ENCODE measurements at regions of chr18 and their contacts with region 1.

Region 1: GRCh38 chr18:3665780-3666525 is 216.0 kb downstream of the TGIF1 start:
- DNase-seq: peak; percentile 71
- CTCF ChIP-seq: peak; percentile 86

Region 2: GRCh38 chr18:3297025-3297984 is 368.6 kb before region 1 on chr18:
- CTCF ChIA-PET with region 1: interaction called, 34 read pairs
- POLR2A ChIA-PET with region 1: no interaction called
- DNase-seq: peak; percentile 81
- CTCF ChIP-seq: peak; percentile 88

Region 3: GRCh38 chr18:3451183-3451988 is 214.6 kb before region 1 on chr18:
- CTCF ChIA-PET with region 1: interaction called, 17 read pairs
- POLR2A ChIA-PET with region 1: no interaction called
- DNase-seq: peak; percentile 60
- CTCF ChIP-seq: no peak

Region 4: DNA sequence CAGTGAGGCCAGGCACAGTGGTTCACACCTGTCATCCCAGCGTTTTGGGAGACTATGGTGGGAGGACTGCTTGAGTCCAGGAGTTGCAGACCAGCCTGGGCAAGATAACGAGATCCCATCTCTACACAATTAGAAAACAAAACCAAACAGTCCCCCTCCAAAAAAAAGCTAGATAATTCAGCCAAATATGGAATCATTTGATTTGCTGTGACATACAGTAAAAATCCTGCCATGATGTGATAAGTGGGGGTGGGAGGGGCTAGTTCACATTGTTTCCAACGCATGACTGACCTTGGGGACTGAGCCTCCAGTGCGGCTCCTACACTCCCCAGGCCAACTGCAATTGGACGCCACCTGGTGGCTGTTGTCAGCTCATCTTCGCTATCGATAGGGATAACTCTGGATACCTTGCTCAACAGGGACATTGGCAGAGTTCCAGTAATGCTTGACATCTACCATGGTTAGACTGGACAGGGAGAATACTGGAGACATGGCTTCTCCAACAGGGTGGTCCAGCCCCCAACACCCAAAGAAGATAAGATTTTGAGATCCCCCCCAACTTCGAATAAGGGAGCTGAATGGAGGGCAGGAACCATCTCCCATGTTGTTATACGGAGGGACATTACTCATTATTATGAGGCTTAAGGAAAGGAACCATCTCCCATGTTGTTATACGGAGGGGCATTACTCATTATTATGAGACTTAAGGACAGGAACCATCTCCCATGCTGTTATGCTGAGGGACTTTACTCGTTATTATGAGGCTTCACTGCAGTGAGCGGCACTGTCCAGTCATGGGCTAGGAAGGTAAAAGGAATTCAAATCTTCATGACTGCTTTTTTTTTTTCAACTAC is 80.1 kb before region 1 on chr18:
- CTCF ChIA-PET with region 1: interaction called, 18 read pairs
- POLR2A ChIA-PET with region 1: no interaction called
- DNase-seq: peak; percentile 61
- CTCF ChIP-seq: peak; percentile 81

Region 5: DNA sequence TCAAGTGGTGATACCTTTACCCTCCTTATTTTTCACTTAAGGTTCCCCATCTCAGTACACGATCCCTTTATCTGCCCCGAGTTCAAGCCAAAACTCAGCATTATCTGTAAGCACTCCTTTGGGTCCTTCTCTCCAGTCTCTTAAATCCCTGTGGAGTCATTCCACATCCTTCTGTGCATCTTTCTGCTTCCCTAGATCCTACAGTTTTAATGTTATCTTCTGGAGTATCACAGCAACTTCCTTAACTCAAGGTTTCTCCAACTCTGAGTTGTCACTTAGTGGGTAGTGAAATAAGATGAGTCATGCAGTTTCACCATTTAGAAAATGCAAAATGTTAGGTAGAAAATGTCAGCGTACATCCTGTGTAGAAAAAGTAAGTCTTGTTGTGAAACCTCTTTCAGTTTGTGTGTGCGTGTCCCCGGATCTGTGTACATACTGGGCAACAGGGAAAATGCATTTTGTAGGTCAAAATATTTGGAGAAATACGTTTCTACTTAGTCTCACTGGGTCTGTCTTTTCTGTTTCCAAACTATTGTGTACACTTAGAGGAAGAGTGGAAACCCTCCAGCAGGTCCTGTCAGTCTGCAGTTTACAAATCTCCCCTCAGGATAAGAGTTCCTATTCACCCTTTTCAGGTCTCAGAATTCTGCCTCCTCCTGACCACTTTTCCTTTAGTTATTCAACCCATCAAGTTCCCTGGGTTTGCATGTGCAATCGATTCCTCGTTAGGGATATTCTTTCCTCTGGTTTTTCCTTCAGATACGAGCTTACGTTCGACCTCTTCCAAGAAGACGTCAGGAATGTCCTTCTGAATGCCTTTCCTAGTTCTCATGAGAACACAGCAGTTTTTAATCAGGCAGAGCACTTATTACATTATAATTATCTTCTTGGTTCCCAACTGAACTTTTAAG is 61.2 kb before region 1 on chr18:
- CTCF ChIA-PET with region 1: interaction called, 11 read pairs
- POLR2A ChIA-PET with region 1: no interaction called
- DNase-seq: peak; percentile 47
- CTCF ChIP-seq: no peak

Region 6: DNA sequence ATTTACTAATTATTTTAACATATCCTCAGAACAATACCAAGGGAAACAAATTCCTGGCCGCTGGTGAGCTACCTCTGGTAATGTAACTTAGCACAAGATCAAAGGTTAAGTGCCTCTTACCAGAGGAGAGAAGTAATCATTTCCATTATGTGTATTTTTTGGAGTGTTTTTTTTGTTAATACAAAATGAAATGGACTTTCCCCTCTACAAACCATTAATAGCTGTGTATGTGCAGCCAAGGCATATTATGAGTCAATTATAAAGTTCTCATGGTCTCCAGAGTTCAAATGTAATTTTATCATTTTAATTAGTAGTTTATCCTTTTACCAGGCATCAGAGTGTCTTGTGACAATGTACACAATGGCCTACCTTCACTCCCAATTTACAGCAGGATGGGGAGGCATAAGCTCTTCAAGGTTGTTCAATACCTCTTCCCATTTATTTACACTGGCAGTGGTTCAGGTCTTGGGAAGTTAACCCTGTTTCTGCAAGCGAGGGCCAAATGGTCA is 26.2 kb after region 1 on chr18:
- CTCF ChIA-PET with region 1: interaction called, 13 read pairs
- POLR2A ChIA-PET with region 1: no interaction called
- DNase-seq: no peak
- CTCF ChIP-seq: no peak